Vagina (tissue), 2 donors: ENCODE measurements at regions of chr17 and their contacts with region 1.

Region 1: GRCh38 chr17:8991514-8992285 is 26.2 kb upstream of the PIK3R5 start:
- DNase-seq: no peak
- H3K4me3 ChIP-seq: no peak overlapping the region
- H3K27ac ChIP-seq: no peak overlapping the region
- H3K4me1 ChIP-seq: no peaks in the 10 kb centered on the region
- H3K27me3 ChIP-seq: no peaks in the 10 kb centered on the region
- CTCF ChIP-seq: peak; percentile 56 to 83 (median 72)
- POLR2A ChIP-seq: no peak

Region 2: GRCh38 chr17:9522074-9522473 is 530.4 kb after region 1 on chr17:
- intact Hi-C with region 1: loop called (anchors 10 kb)
- DNase-seq: no peak
- H3K4me3 ChIP-seq: no peak overlapping the region
- H3K27ac ChIP-seq: no peak overlapping the region
- H3K4me1 ChIP-seq: no peaks in the 10 kb centered on the region
- H3K27me3 ChIP-seq: no peaks in the 10 kb centered on the region
- CTCF ChIP-seq: peak in 2 of 3 experiments; percentile 60 to 71
- POLR2A ChIP-seq: no peak